ENCODE measurements at regions of chr1 and their contacts with region 1.

Region 1: DNA sequence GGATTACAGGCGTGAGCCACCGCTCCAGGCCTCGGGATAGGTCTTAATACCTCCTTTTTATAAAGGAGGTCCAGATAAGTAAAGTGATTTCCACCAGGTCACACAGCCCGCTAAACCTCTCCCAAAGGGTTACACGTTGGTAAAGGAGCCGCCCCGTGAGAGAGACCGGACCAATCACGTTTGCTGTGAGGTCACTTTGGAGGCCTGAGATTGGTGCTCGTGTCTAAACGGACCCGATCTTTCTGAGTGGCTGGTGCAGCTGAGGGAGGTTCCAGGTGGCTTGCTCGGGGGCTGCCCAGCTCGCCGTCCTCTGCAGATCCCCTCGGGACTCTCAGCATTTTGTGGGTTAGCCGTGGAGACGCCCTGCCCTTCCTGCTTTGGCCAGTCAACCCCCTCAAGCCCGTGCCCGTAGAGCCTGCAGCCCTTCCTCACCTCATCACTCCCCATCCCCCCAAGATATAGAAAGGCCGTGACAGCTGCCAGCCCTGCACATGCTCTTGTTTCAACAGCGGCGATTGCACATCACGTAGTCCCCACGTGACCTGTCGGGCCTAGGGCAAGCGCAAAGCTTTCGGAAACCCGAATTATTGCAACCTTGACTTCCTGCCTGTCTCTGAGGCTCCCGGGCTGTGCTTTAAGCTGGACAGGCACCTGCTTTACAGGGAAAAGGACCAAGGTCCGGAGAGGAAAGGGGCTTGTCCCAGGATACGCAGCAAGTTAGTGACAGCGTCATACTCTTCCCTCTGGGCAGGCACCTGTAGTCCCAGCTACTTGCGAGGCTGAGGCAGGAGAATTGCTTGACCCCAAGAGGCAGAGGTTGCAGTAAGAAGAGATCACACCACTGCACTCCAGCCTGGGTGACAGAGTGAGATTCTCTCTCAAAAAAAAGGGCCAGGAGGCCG is 5.0 kb upstream of the COA7 start:
- ATAC-seq: peak; percentile 82 to 91 (median 88)
- H3K4me3 ChIP-seq: peak overlapping the region; percentile 24 to 38 (median 32)
- H3K27ac ChIP-seq: peak overlapping the region; percentile 78 to 80
- H3K4me1 ChIP-seq: peaks cover 10 to 12% of the 10 kb centered on the region in 2 donors

Region 2: DNA sequence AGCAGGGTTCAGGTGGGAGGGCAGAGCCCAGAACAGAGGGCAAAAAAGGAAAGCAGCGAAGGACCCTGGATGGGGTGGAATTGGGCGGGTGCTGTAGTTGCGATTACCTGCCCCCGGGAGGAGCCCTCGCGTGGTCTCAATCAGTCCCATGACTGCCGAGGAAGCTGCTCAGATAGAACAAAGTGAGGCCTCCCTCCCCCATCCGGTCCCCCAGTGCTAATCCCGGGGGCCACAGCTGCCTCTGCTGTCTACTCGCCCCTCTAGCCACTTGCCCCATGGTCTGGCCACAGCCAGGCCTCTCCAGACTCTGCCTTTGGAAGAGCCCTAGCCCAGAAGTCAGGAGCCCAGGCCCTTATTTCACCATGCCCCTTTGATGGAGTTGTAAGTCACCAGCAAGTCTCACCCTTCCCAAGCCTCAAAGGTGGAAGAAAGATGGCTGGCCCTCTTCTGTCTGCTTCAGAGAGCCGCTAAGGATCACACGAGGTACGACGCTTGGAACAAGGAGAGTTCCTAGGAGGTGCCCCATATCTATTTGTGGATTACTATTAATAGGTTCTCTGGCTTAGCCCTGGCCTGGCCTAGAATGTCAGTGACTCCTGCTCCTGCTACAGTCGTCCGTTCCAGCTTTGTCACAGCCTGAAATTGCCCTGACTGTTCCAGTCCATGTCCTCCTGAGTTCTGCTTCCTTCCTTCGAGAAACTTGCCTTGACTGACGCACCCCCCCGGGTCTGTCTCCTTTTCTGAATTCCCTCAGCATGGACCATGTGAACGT is 202.0 kb after region 1 on chr1:
- in situ Hi-C with region 1: loop called in 1 of 9 experiments (anchors 25 kb)
- ATAC-seq: peak in 5 of 8 experiments; percentile 27 to 52 (median 43)
- H3K4me3 ChIP-seq: no peak overlapping the region
- H3K27ac ChIP-seq: no peak overlapping the region
- H3K4me1 ChIP-seq: peaks cover 4 to 6% of the 10 kb centered on the region in 2 donors